Panc1 (cell line): ENCODE measurements at regions of chr6 and their contacts with region 1.

Region 1: DNA sequence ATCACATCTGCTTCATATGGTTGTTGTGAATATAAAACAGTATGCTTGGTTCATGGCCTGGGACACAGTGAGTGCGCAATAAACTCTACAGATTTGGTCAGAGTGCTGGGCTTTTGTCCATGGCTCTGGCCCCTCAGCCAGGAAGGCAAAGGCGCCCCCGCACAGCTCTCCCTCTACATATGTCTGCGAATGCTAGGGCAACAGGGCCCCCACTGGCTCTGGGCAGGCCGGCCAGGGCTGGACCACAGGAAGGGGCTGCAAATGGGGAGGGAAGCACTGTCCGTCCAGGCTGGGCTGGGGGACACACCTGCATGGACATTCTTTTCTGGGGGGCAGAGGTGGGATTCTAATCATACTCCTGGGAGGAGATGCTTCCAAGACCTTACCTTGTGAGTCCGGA is 151.8 kb upstream of the MLN start:
- DNase-seq: no peak
- ATAC-seq: no peak
- H3K4me3 ChIP-seq: no peak overlapping the region
- H3K27ac ChIP-seq: no peak overlapping the region
- H3K4me1 ChIP-seq: no peaks in the 10 kb centered on the region; the same call in 1 of the 2 replicates
- H3K27me3 ChIP-seq: no peaks in the 10 kb centered on the region; the same call in 1 of the 2 replicates
- CTCF ChIP-seq: no peak

Region 2: DNA sequence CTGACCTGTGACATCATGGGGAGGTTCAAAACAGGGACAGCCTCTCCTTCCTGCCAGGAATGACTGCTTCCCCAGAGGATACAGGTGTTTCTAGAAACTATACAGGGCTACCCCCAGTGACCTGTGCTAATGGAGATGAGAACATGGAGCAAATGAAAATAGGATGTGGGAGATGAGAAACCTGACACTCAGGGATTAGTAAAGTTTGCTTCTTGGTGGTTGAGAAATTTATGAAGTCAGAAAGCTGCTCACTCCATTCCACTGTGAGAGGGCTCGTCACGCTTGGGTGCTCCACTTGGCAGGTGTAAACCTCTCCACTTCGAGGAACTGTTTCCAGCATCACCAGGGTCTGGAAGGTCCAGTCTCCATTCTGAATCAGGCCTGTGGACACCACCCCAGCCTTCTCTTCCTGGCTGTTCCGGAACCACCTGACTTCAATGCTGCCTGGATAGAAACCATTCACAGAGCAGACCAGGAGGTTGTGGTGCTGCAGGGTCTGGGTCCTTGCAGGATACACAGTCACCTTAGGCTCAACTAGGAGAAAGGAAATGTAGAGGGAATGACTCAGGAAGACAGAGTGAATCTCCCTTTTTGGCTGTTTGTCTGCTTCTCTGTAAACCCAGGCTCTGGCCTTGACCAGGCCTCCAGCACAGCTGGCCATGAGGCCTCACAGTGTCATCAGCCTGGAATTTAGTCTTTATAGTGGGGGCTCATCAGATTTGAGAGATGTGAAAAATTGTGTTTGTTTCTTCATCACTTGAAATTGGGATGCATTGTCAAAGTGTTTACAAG is 1436.3 kb before region 1 on chr6:
- CTCF ChIA-PET with region 1: no interaction called
- POLR2A ChIA-PET with region 1: no interaction called
- in situ Hi-C with region 1: no loop called
- intact Hi-C with region 1: no loop called
- DNase-seq: no peak
- ATAC-seq: no peak
- H3K4me3 ChIP-seq: no peak overlapping the region
- H3K27ac ChIP-seq: no peak overlapping the region
- H3K4me1 ChIP-seq: no peaks in the 10 kb centered on the region
- H3K27me3 ChIP-seq: no peaks in the 10 kb centered on the region
- CTCF ChIP-seq: no peak

Region 3: GRCh38 chr6:33826537-33826936 is 129.0 kb before region 1 on chr6:
- CTCF ChIA-PET with region 1: no interaction called
- POLR2A ChIA-PET with region 1: interaction called, 20 read pairs
- in situ Hi-C with region 1: no loop called
- intact Hi-C with region 1: no loop called
- DNase-seq: no peak
- ATAC-seq: no peak
- H3K4me3 ChIP-seq: no peak overlapping the region
- H3K27ac ChIP-seq: no peak overlapping the region
- H3K4me1 ChIP-seq: peaks cover 29% of the 10 kb centered on the region
- H3K27me3 ChIP-seq: no peaks in the 10 kb centered on the region
- CTCF ChIP-seq: no peak